ENCODE measurements at regions of chr6 and their contacts with region 1.

Region 1: DNA sequence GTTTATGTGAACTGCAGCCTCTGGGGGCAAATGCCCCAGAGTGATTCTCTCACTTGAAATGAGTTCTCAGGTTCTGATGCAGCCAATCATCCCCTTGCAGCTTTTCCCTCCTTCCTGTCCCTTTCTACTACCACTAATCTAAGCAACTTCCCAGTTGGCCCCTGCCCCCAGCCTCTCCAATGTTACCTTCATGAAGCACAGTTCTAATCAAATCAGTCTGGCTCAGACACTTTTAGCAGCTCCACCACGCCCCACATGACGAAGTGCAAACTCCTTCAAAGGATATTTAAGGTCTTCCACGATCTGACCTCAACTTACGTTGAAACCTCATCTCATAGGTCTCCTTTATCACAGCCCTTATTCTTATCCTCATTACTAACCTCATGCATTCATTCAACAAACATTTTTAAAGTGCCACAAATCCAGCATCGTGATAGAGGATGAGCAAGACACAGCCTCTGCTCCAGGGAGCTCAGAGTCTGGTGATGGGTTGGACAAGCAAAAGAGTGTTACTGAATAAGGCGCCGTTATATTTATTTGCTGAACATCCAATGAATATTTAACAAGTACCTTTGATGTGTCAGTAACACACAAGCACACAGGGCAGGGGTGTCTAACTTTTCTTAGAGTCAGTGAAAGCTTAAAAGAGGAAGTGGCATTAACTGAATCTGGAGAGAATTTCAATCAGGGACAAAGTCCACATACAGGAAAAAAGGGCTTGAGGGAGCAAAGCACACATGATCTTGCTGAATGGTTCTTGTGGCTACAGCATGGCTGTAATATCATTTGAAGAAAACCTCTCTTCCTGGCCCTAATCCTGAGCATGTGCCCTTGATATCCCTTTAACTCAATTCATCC is 20.4 kb upstream of the DTNBP1 start:
- DNase-seq: no peak
- CTCF ChIP-seq: no peak

Region 2: GRCh38 chr6:14231546-14232280 is 1451.5 kb before region 1 on chr6:
- in situ Hi-C with region 1: no loop called
- DNase-seq: no peak
- CTCF ChIP-seq: no peak

Region 3: DNA sequence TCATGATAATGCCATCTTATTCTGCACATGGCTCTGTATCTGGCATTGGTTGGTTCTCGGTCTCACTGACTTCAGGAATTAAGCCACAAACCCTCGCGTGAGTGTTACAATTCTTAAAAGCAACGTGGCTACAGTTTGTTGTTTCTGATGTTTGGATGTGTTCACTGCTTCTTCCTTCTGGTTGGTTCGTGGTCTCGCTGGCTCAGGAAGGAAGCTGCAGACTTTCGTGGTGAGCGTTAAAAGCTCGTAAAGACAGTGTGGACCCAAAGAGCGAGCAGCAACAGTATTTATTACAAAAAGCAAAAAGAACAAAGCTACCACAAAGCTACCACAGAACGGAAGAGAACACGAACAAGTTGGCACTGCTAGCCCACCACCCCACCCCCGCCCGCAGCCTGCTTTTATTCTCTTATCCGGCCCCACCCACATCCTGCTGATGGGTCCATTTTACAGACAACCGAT is 496.8 kb after region 1 on chr6:
- in situ Hi-C with region 1: loop called (anchors 10 kb)
- DNase-seq: no peak
- CTCF ChIP-seq: no peak

Region 4: DNA sequence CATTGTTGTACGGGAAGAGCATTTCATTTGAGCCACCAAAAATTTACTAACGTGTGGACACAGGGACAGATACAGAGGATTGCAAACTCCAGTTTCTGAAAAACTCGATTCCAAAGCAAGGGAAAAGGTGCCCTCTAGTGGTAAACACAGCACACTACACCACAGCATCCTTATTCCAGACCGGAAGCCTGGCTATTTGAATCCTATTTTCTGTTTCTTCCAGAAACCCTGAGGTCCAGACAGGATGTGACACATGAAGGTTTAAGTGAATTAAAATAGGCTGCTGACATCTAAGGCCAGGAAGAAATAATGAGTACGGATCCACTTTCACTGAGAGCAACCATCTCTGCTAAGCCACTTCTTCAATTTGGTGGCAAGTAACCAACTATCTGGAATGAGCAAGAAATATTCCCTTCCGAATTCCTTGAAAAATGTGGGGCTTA is 523.4 kb after region 1 on chr6:
- in situ Hi-C with region 1: loop called (anchors 10 kb)
- DNase-seq: peak; percentile 69
- CTCF ChIP-seq: peak; percentile 87

Measured in GM13977 (cell line).